Heart left ventricle (tissue), 16 donors: ENCODE measurements at regions of chr13 and their contacts with region 1.

Region 1: GRCh38 chr13:100573121-100573520 is 15.5 kb downstream of the GGACT start:
- DNase-seq: peak in 4 of 5 donors; percentile 55 to 72 (median 62)
- ATAC-seq: peak in 3 of 4 donors; percentile 70 to 79 (median 78)
- H3K4me3 ChIP-seq: no peak overlapping the region
- H3K27ac ChIP-seq: no peak overlapping the region
- H3K4me1 ChIP-seq: no peaks in the 10 kb centered on the region
- H3K27me3 ChIP-seq: no peaks in the 10 kb centered on the region
- CTCF ChIP-seq: peak; percentile 53 to 79 (median 66)
- POLR2A ChIP-seq: no peak

Region 2: DNA sequence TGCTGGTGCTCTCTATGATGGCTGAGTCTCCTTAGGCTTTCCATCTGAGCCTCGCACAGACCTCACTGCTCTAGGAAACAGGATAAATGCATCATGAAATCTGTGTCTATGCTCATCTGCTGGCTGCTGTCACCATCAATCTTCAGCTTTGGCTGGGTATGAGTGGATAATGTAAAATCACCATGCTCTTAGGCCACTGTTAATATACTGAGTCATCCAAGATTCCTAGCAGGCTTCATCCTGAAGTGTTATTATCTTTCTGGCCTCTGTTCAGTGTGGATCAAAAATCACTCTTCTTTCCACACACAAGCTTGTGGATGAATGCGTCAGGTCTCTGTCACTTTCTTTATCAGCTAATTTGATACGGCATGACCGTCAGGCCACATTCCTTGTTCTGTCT is 525.8 kb after region 1 on chr13:
- intact Hi-C with region 1: loop called in 2 of 10 experiments (anchors 5 kb)
- DNase-seq: no peak
- ATAC-seq: no peak
- H3K4me3 ChIP-seq: no peak overlapping the region
- H3K27ac ChIP-seq: no peak overlapping the region
- H3K4me1 ChIP-seq: no peaks in the 10 kb centered on the region
- H3K27me3 ChIP-seq: no peaks in the 10 kb centered on the region
- CTCF ChIP-seq: no peak
- POLR2A ChIP-seq: no peak

Region 3: DNA sequence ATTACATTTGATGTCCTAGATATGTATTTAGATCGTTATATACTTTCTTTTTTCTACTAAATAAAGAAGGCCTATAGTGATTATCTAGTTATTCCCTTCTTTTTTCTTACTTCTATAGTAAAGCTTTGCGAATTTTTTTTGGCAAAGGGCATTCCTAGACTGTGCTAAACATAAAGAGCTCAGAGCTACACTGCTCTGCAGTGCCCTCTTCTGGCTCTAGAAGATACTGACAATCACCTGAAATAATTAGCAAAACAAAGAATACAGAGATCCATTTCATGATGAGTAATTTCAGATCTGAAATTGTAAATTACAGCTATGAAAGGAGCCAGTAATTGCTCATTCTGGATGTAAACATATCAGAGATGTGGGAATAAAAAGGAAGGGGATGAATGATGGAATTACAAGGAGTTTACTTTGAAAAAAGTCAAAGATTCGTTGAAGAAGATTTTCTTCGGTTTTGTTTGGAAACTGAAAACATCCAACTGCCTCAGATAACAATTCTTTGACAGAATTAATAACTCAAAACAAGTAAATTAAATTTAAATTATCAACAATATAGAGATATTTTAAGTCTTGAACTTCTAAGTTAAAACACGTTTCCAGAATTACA is 554.7 kb after region 1 on chr13:
- intact Hi-C with region 1: loop called in 4 of 10 experiments (anchors 2 to 10 kb)
- DNase-seq: no peak
- ATAC-seq: peak in 2 of 4 donors; percentile 47 to 52
- H3K4me3 ChIP-seq: no peak overlapping the region
- H3K27ac ChIP-seq: no peak overlapping the region
- H3K4me1 ChIP-seq: no peaks in the 10 kb centered on the region
- H3K27me3 ChIP-seq: no peaks in the 10 kb centered on the region
- CTCF ChIP-seq: peak; percentile 45 to 77 (median 67)
- POLR2A ChIP-seq: no peak

Region 4: GRCh38 chr13:101473458-101473857 is 900.3 kb after region 1 on chr13:
- intact Hi-C with region 1: no loop called
- DNase-seq: peak in 1 of 5 donors; percentile 41
- ATAC-seq: peak in 3 of 4 donors; percentile 47 to 58 (median 56)
- H3K4me3 ChIP-seq: no peak overlapping the region
- H3K27ac ChIP-seq: no peak overlapping the region
- H3K4me1 ChIP-seq: peaks cover 0 to 5% (median 0%) of the 10 kb centered on the region in 12 donors
- H3K27me3 ChIP-seq: no peaks in the 10 kb centered on the region
- CTCF ChIP-seq: no peak
- POLR2A ChIP-seq: no peak